AG04450 (cell line): ENCODE measurements at regions of chr10 and their contacts with region 1.

Region 1: DNA sequence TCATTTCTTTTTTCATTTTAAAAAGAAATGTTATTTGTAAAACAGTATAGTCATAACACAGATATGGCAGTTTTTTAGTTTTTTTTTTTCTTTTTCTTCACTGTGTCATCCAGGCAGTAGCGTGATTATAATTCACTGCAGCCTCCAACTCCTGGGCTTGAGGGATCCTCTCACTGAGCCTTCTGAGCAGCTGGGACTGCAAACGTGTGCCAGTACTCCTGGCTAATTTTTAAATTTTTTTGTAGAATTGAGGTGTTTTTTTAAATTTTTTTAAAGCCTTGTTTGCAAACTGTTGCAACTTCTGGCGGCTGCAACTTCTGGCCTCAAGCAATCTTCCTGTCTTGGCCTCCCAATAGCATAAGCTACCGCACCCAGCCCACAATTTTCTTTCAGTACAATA is 63.0 kb downstream of the HELLS start:
- DNase-seq: no peak
- H3K4me3 ChIP-seq: no peak overlapping the region
- H3K27ac ChIP-seq: no peak overlapping the region
- H3K27me3 ChIP-seq: no peaks in the 10 kb centered on the region
- CTCF ChIP-seq: no peak

Region 2: DNA sequence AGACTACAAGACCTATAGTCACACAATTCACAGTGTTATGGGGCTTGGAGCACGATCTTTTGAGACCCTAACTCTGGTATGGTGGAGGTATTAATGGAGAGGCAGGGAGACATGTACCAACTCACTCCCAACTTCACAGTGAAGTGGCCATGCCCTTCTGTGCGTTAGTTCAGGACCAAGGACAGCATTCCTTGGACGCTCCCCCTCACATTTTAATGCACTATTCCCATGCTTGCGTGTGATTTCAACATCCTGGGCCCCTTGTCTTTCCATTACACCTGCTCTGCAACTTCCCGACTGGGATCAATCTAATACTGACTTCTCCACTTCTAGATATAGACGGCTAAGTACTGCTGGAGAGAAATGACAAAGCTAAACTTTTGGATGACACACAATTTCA is 542.1 kb before region 1 on chr10:
- CTCF ChIA-PET with region 1: interaction called, 12 read pairs
- POLR2A ChIA-PET with region 1: no interaction called
- DNase-seq: no peak
- H3K4me3 ChIP-seq: no peak overlapping the region
- H3K27ac ChIP-seq: no peak overlapping the region
- H3K27me3 ChIP-seq: no peaks in the 10 kb centered on the region
- CTCF ChIP-seq: no peak

Region 3: DNA sequence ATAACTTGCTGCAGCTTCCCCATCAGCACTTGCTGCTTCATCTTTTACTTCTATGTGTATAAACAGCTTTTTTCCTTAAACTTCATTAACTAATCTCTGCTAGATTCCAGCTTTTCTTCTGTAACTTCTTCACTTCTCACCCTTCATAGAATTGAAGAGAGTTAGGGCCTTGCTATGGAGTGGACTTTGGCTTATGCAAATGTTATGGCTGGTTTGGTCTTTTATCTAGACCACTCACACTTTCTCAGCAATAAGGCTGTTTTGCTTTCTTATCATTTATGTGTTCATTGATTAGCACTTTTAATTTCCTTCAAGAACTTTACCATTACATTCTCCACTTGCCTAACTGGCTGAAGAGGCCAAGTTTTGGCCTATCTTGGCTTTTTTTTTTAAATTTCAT is 127.1 kb before region 1 on chr10:
- CTCF ChIA-PET with region 1: no interaction called
- POLR2A ChIA-PET with region 1: no interaction called
- DNase-seq: no peak
- H3K4me3 ChIP-seq: no peak overlapping the region
- H3K27ac ChIP-seq: no peak overlapping the region
- H3K27me3 ChIP-seq: no peaks in the 10 kb centered on the region
- CTCF ChIP-seq: no peak